ENCODE measurements at regions of chr12 and their contacts with region 1.

Region 1: DNA sequence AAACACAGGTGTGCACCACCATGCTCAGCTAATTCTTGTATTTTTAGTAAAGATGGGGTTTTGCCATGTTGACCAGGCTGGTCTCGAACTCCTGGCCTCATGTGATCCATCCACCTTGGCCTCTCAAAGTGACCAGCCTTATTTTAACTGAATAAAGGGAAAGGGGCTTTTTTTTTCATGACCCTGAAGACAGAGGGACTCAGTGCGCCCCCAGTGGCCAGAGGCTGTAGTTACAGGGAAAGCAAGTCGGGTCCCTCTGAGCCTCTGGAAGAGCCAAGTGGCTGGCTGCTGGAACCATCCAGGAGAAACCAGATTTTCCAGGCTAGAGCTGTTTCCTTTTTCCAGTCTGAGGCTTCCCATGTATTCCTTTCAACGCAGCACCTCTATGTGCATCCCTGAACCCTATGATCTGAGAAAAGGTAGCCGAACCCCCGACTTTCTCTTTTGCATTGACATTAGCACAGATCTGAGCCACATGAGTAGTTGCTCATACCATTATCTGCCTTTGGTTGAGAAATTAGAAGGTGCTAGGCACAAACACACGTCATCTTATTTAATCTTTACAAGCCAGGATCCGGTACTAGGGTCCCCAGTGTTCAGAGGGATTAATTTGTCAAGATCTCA is 342.7 kb downstream of the CACNA1C start:
- DNase-seq: peak; percentile 41 to 88
- H3K4me3 ChIP-seq: no peak overlapping the region
- H3K27ac ChIP-seq: no peak overlapping the region
- H3K4me1 ChIP-seq: no peaks in the 10 kb centered on the region; a peak in 1 of 7 replicates
- H3K27me3 ChIP-seq: no peaks in the 10 kb centered on the region
- CTCF ChIP-seq: peak; percentile 80 to 87 (median 86)
- EP300 ChIP-seq: no peak
- POLR2A ChIP-seq: no peak
- RAD21 ChIP-seq: peak; percentile 60 to 73

Region 2: DNA sequence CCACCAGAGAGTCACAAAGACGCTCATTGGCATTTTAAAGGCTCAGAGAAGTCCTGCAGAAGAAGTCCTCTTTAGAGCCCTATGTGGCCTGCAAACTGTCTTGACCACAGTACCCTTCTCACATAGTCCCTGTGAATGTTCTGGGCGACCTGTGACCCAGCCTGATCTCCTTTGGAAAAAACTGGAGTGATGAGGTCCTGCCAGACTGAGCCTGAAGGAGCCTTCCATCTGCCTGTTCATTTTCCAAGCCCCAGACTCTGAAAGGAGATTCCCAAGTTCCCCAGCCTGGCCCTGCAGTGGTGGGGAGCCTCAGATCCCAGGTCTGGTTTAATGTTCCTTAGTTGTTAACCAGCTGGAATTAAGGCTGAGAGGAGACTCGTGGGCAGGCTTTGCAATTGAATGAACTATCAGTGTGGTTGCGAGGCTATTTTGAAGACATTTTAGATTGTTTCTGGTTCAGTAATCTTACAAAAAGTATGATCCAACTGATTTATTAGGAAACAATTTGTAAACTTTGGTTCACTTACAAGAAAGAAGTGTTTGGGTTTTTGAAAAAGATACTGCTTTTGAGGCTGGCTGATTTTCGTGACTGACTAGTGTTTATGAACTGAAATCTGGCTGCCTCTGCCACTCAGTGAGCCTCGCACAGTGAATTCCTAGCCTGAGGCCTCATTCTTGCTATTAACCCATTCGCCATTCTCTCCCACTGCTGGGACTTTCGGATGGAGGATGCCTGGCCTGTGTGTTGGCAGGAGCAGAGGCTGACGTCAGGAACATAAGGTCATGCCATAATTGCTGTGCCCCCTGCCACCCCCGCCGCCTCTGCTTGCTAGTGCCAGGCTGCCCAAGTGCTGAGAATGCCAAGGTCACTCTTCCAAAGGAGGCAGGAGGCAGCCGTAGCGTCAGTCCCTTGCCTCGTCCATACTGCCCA is 93.7 kb before region 1 on chr12:
- CTCF ChIA-PET with region 1: interaction called, 17 read pairs
- POLR2A ChIA-PET with region 1: no interaction called
- DNase-seq: no peak
- H3K4me3 ChIP-seq: no peak overlapping the region
- H3K27ac ChIP-seq: no peak overlapping the region
- H3K4me1 ChIP-seq: peaks cover 3 to 11% (median 8%) of the 10 kb centered on the region in 4 experiments
- H3K27me3 ChIP-seq: no peaks in the 10 kb centered on the region
- CTCF ChIP-seq: no peak
- EP300 ChIP-seq: no peak
- POLR2A ChIP-seq: no peak
- RAD21 ChIP-seq: no peak

Region 3: GRCh38 chr12:2376908-2377657 is 18.4 kb before region 1 on chr12:
- CTCF ChIA-PET with region 1: interaction called, 77 read pairs
- POLR2A ChIA-PET with region 1: no interaction called
- DNase-seq: peak; percentile 29 to 64
- H3K4me3 ChIP-seq: no peak overlapping the region
- H3K27ac ChIP-seq: no peak overlapping the region; the same call in 1 of the 2 replicates
- H3K4me1 ChIP-seq: peaks cover 4 to 10% (median 6%) of the 10 kb centered on the region in 4 experiments; a peak in 6 of 7 replicates
- H3K27me3 ChIP-seq: no peaks in the 10 kb centered on the region
- CTCF ChIP-seq: peak in 2 of 3 experiments; percentile 18 to 28; a peak in 2 of 4 replicates
- EP300 ChIP-seq: no peak
- POLR2A ChIP-seq: no peak
- RAD21 ChIP-seq: peak; percentile 7 to 37; a peak in 3 of 4 replicates

Region 4: GRCh38 chr12:2414810-2415567 is 19.5 kb after region 1 on chr12:
- CTCF ChIA-PET with region 1: interaction called, 94 read pairs
- POLR2A ChIA-PET with region 1: interaction called, 4 read pairs
- DNase-seq: no peak
- H3K4me3 ChIP-seq: no peak overlapping the region
- H3K27ac ChIP-seq: no peak overlapping the region
- H3K4me1 ChIP-seq: peaks cover 9 to 37% (median 23%) of the 10 kb centered on the region in 4 experiments
- H3K27me3 ChIP-seq: no peaks in the 10 kb centered on the region; a peak in 1 of 7 replicates
- CTCF ChIP-seq: peak in 2 of 3 experiments; percentile 15 to 24; a peak in 3 of 4 replicates
- EP300 ChIP-seq: no peak
- POLR2A ChIP-seq: no peak
- RAD21 ChIP-seq: peak in 1 of 2 experiments; percentile 25; a peak in 1 of 4 replicates

Measured in H1 (cell line).